AG04450 (cell line): ENCODE measurements at regions of chr20 and their contacts with region 1.

Region 1: GRCh38 chr20:33862709-33863403 is 51.7 kb downstream of the CHMP4B start:
- DNase-seq: peak; percentile 41
- H3K4me3 ChIP-seq: 0 out of 2 replicates have a peak overlapping the region, but pooled peaks have one; percentile 22
- H3K27ac ChIP-seq: no peak overlapping the region
- H3K27me3 ChIP-seq: peaks cover 4% of the 10 kb centered on the region
- CTCF ChIP-seq: peak; percentile 64

Region 2: DNA sequence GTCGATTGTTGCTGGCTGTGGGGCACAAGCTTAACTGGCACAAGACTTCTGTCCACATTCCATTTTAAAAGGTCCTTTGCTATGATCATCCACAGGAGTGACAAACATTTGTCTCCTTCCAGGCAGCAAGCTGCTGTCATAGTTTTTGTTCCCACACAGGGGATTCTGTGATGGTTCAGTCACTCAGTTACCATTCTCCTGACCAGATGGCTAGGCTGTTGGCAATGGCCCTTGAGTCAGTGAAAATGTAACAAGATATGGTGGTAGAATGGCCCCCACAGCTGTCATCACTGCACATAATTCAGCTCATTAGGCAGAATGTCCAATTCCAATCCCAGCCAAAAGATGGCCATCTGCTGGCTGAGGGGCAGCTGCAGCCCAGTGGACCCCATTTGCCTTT is 613.4 kb before region 1 on chr20:
- CTCF ChIA-PET with region 1: no interaction called
- POLR2A ChIA-PET with region 1: no interaction called
- DNase-seq: no peak
- H3K4me3 ChIP-seq: no peak overlapping the region
- H3K27ac ChIP-seq: no peak overlapping the region
- H3K27me3 ChIP-seq: no peaks in the 10 kb centered on the region
- CTCF ChIP-seq: no peak

Region 3: GRCh38 chr20:33606118-33606771 is 256.6 kb before region 1 on chr20:
- CTCF ChIA-PET with region 1: no interaction called
- POLR2A ChIA-PET with region 1: no interaction called
- DNase-seq: no peak
- H3K4me3 ChIP-seq: no peak overlapping the region
- H3K27ac ChIP-seq: no peak overlapping the region
- H3K27me3 ChIP-seq: no peaks in the 10 kb centered on the region
- CTCF ChIP-seq: no peak

Region 4: DNA sequence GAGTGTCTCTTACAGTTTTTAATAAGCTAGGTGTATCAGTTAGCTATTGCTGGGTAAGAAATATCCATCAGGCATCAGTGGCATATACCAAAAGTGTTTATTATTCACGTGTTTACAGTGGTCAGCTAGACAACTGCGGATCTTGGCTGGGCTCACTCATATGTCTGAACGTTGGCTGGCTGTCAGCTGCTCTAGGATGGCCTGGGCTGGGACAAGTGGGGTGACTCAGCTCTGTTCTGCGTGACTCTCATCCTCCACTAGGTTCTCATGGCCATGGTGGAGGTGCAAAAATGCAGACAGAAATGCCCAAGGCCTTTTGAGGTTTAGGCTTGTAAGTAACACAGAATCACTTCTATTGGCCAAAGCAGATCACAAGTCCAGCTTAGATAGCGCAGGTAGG is 109.1 kb before region 1 on chr20:
- CTCF ChIA-PET with region 1: no interaction called
- POLR2A ChIA-PET with region 1: no interaction called
- DNase-seq: no peak
- H3K4me3 ChIP-seq: no peak overlapping the region
- H3K27ac ChIP-seq: no peak overlapping the region
- H3K27me3 ChIP-seq: no peaks in the 10 kb centered on the region
- CTCF ChIP-seq: no peak

Region 5: GRCh38 chr20:34069341-34070078 is 206.7 kb after region 1 on chr20:
- CTCF ChIA-PET with region 1: interaction called, 84 read pairs
- POLR2A ChIA-PET with region 1: no interaction called
- DNase-seq: peak; percentile 69
- H3K4me3 ChIP-seq: no peak overlapping the region
- H3K27ac ChIP-seq: no peak overlapping the region
- H3K27me3 ChIP-seq: no peaks in the 10 kb centered on the region
- CTCF ChIP-seq: peak; percentile 92

Region 6: GRCh38 chr20:34083137-34083536 is 220.3 kb after region 1 on chr20:
- CTCF ChIA-PET with region 1: interaction called, 11 read pairs
- POLR2A ChIA-PET with region 1: no interaction called
- DNase-seq: peak; percentile 61
- H3K4me3 ChIP-seq: no peak overlapping the region
- H3K27ac ChIP-seq: peak overlapping the region; percentile 40
- H3K27me3 ChIP-seq: no peaks in the 10 kb centered on the region
- CTCF ChIP-seq: no peak

Region 7: GRCh38 chr20:34129518-34130162 is 266.8 kb after region 1 on chr20:
- CTCF ChIA-PET with region 1: interaction called, 12 read pairs
- POLR2A ChIA-PET with region 1: interaction called, 3 read pairs
- DNase-seq: peak; percentile 52
- H3K4me3 ChIP-seq: no peak overlapping the region
- H3K27ac ChIP-seq: no peak overlapping the region
- H3K27me3 ChIP-seq: peaks cover 5% of the 10 kb centered on the region
- CTCF ChIP-seq: peak; percentile 82